CD4-positive, alpha-beta T cell (primary cell): ENCODE measurements at regions of chr2 and their contacts with region 1.

Region 1: GRCh38 chr2:97697252-97698235 is 15.8 kb upstream of the ZAP70 start:
- DNase-seq: peak; percentile 86 to 98 (median 94)
- ATAC-seq: peak; percentile 92
- H3K4me3 ChIP-seq: no peak overlapping the region
- H3K4me3 Mint-ChIP-seq: no peak overlapping the region
- H3K27ac ChIP-seq: no peak overlapping the region
- H3K27ac Mint-ChIP-seq: no peak overlapping the region
- H3K4me1 ChIP-seq: peaks cover 2% of the 10 kb centered on the region
- H3K4me1 Mint-ChIP-seq: peaks cover 11% of the 10 kb centered on the region
- H3K27me3 ChIP-seq: no peaks in the 10 kb centered on the region
- H3K27me3 Mint-ChIP-seq: peaks cover 4% of the 10 kb centered on the region
- CTCF ChIP-seq: peak; percentile 90

Region 2: GRCh38 chr2:97645695-97646629 is 51.6 kb before region 1 on chr2 and contains the start of gene COX5B:
- CTCF ChIA-PET with region 1: interaction called, 6 read pairs
- POLR2A ChIA-PET with region 1: interaction called, 7 read pairs
- intact Hi-C with region 1: loop called (anchors 1 to 10 kb)
- DNase-seq: peak; percentile 96 to 99 (median 98)
- ATAC-seq: peak; percentile 96
- H3K4me3 ChIP-seq: peak within 1 kb of the TSS; percentile 97
- H3K4me3 Mint-ChIP-seq: peak within 1 kb of the TSS; percentile 97
- H3K27ac ChIP-seq: peak within 1 kb of the TSS; percentile 84 to 89
- H3K27ac Mint-ChIP-seq: peak within 1 kb of the TSS; percentile 93
- H3K4me1 ChIP-seq: peaks cover 18% of the 10 kb centered on the region
- H3K4me1 Mint-ChIP-seq: peaks cover 31% of the 10 kb centered on the region
- H3K27me3 ChIP-seq: no peaks in the 10 kb centered on the region
- H3K27me3 Mint-ChIP-seq: no peaks in the 10 kb centered on the region
- CTCF ChIP-seq: no peak
- total RNA-seq, gene COX5B: 112 to 121 TPM

Region 3: GRCh38 chr2:97710596-97711386 is 13.2 kb after region 1 on chr2:
- CTCF ChIA-PET with region 1: interaction called, 19 read pairs
- POLR2A ChIA-PET with region 1: interaction called, 4 read pairs
- intact Hi-C with region 1: no loop called
- DNase-seq: peak in 3 of 14 experiments; percentile 32 to 51 (median 42)
- ATAC-seq: no peak
- H3K4me3 ChIP-seq: no peak overlapping the region
- H3K4me3 Mint-ChIP-seq: peak overlapping the region; percentile 51
- H3K27ac ChIP-seq: peak overlapping the region; percentile 5 to 9
- H3K27ac Mint-ChIP-seq: peak overlapping the region; percentile 98
- H3K4me1 ChIP-seq: peaks cover 62% of the 10 kb centered on the region
- H3K4me1 Mint-ChIP-seq: peaks cover 58% of the 10 kb centered on the region
- H3K27me3 ChIP-seq: no peaks in the 10 kb centered on the region
- H3K27me3 Mint-ChIP-seq: no peaks in the 10 kb centered on the region
- CTCF ChIP-seq: no peak

Region 4: DNA sequence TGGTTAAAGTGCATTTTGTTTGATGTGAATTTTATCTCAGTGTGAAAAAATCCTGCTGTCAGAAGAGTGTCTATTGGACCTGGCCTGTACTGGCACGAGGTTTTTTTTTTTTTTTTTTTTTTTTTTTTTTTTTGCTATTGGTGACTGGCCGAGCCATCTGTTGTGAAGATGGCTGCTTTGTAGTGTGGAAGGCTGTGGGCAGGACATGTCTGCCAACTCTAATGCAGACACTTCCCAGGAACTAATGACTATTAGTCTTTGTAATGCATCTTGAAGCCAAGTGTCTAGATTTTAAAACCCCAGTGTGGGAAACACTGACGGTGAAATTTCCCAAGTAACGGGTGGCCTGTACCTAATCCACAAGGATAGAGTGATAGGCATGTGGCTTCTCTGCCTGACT is 50.2 kb after region 1 on chr2:
- CTCF ChIA-PET with region 1: interaction called, 23 read pairs
- POLR2A ChIA-PET with region 1: interaction called, 4 read pairs
- intact Hi-C with region 1: loop called (anchors 1 kb)
- DNase-seq: no peak
- ATAC-seq: no peak
- H3K4me3 ChIP-seq: no peak overlapping the region
- H3K4me3 Mint-ChIP-seq: no peak overlapping the region
- H3K27ac ChIP-seq: no peak overlapping the region
- H3K27ac Mint-ChIP-seq: peak overlapping the region; percentile 4
- H3K4me1 ChIP-seq: peaks cover 46% of the 10 kb centered on the region
- H3K4me1 Mint-ChIP-seq: peaks cover 52% of the 10 kb centered on the region
- H3K27me3 ChIP-seq: no peaks in the 10 kb centered on the region
- H3K27me3 Mint-ChIP-seq: no peaks in the 10 kb centered on the region
- CTCF ChIP-seq: no peak